ENCODE measurements at regions of chrX and their contacts with region 1.

Region 1: DNA sequence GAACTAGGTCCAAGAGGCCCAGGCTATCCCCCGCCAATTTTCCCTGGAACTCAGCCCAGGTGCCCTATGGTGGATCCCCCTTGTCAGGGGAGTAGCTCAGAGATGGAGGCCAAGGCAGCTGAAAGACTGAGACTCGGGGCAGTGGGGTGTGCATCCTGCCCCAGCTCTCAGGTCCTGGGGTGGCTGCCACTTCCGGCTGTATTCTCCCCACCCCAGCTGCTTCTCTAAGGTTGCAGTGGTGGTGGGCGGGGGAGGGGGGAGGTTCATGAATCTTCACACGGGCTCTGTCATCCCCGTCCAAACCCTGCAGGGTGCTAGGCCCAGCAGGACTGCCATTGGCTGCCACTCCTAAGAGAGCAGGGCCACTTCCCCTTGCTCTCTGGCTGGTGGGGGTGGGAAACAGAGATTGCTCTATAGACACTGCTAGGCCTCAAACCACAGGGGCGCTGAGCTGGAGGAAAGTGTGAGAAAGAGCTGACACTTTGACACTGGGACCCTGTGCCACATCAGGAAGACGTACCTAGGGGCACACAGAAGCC is 1.5 kb downstream of the SASH3 start:
- DNase-seq: peak; percentile 92
- H3K4me3 ChIP-seq: peak overlapping the region; percentile 99
- H3K27ac ChIP-seq: peak overlapping the region; percentile 99
- H3K4me1 ChIP-seq: peaks cover 68% of the 10 kb centered on the region
- CTCF ChIP-seq: no peak

Region 2: GRCh38 chrX:129654419-129655165 is 126.6 kb before region 1 on chrX and contains the start of gene APLN:
- CTCF ChIA-PET with region 1: no interaction called
- POLR2A ChIA-PET with region 1: interaction called, 10 read pairs
- intact Hi-C with region 1: no loop called
- DNase-seq: no peak
- H3K4me3 ChIP-seq: peak within 1 kb of the TSS; percentile 26
- H3K27ac ChIP-seq: no peak within 1 kb of the TSS
- H3K4me1 ChIP-seq: peaks cover 7% of the 10 kb centered on the region
- CTCF ChIP-seq: no peak
- total RNA-seq, gene APLN: not detected in 2 replicates

Region 3: DNA sequence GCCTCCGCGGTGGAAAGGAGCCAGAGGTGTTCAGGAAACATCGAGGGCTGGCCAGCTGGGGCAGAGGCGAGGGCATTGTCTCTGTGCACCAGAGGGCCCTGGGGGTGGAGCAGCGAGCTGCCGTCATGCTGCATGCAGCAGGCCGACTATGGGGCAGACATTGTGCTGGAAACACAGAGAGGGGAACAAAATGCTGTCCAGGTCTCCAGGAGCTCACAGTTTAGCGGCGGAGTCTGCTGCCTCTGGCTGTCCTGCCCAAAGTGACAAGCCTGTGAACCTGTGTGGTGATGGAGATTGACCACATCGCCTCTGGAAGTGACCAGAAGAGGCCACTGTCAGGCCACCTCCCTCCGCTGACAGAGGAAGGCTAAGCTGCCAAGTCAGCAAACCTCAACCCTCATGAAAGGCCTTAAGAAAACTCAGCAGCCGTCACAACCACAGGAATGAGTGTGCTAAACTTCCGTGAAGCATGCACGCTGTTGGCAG is 21.6 kb before region 1 on chrX:
- CTCF ChIA-PET with region 1: no interaction called
- POLR2A ChIA-PET with region 1: interaction called, 17 read pairs
- intact Hi-C with region 1: loop called (anchors 2 kb)
- DNase-seq: no peak
- H3K4me3 ChIP-seq: no peak overlapping the region
- H3K27ac ChIP-seq: peak overlapping the region; percentile 41
- H3K4me1 ChIP-seq: peaks cover 65% of the 10 kb centered on the region
- CTCF ChIP-seq: no peak

Region 4: DNA sequence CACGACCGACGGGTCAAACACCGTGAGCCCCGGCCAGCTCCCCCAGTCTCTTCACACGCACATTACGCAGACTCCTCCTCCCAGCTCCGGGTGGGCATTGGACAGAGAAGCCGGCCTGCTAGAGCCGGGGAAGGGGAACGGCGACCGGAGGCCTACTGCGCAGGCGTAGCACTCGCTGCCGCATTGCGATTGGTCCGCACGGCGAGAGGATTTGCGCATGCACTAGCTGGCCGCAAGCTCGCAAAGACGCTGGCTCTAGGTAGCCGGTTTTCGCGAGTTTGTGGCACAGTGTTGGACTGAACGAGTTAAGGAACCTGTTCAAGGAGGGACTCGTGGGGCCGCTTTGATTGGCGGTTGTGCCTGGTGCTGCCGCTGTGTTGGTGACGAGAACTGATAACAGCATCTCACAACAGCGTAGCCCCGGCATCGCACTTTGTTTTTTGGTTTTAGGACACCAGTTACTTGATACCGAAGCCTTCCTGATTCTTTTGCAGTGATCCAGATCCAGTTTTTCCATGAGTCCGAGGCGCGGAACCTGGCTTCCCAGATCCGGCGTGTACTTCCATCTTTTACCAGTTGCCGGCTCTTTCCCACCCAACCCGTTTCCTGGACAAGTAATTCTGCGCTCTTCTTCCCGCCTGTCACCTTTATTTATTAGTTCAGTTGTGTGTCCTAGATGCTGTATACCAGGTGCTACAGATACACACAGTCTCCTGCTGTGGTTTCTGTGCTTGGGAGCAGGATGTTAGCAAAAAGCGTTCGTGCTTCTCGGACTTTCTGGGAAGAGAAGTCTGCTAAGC is 384.7 kb after region 1 on chrX and contains the start of gene AIFM1:
- CTCF ChIA-PET with region 1: no interaction called
- POLR2A ChIA-PET with region 1: no interaction called
- intact Hi-C with region 1: loop called (anchors 10 kb)
- DNase-seq: peak; percentile 94
- H3K4me3 ChIP-seq: peak within 1 kb of the TSS; percentile 77
- H3K27ac ChIP-seq: peak within 1 kb of the TSS; percentile 87
- H3K4me1 ChIP-seq: peaks cover 28% of the 10 kb centered on the region
- CTCF ChIP-seq: no peak
- total RNA-seq, gene AIFM1: 23.1 and 28.8 TPM in 2 replicates